Transverse colon (tissue), 4 donors: ENCODE measurements at regions of chr2 and their contacts with region 1.

Region 1: DNA sequence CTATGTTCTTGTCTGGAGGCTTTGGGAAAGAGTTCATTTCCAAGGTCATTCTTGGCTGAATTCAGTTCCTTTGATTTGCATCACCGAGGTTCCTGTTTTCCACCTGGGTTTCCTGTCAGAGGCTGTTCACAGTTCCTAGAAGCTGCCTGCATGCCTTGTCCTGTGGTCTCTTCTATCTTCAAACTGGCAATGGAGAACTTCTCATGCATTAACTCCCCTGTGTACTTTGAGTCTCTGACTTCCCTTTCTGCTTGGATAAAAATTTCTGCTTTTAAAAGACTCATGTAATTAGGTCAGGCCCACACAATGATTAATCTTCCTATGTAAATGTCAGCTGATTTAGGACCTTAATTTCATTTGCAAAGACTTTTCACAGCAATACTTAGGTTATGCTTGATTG is 499.3 kb upstream of the FANCL start:
- DNase-seq: no peak
- H3K4me3 ChIP-seq: no peak overlapping the region
- H3K27ac ChIP-seq: no peak overlapping the region
- H3K4me1 ChIP-seq: no peaks in the 10 kb centered on the region
- H3K27me3 ChIP-seq: no peaks in the 10 kb centered on the region
- CTCF ChIP-seq: no peak
- EP300 ChIP-seq: no peak
- POLR2A ChIP-seq: no peak

Region 2: GRCh38 chr2:58398406-58398805 is 342.0 kb before region 1 on chr2:
- in situ Hi-C with region 1: no loop called
- intact Hi-C with region 1: no loop called
- DNase-seq: no peak
- H3K4me3 ChIP-seq: no peak overlapping the region
- H3K27ac ChIP-seq: no peak overlapping the region
- H3K4me1 ChIP-seq: no peaks in the 10 kb centered on the region
- H3K27me3 ChIP-seq: no peaks in the 10 kb centered on the region
- CTCF ChIP-seq: no peak
- EP300 ChIP-seq: no peak
- POLR2A ChIP-seq: no peak

Region 3: GRCh38 chr2:58769864-58770234 is 29.4 kb after region 1 on chr2:
- in situ Hi-C with region 1: no loop called
- intact Hi-C with region 1: loop called (anchors 1 kb)
- DNase-seq: no peak
- H3K4me3 ChIP-seq: no peak overlapping the region
- H3K27ac ChIP-seq: no peak overlapping the region
- H3K4me1 ChIP-seq: no peaks in the 10 kb centered on the region
- H3K27me3 ChIP-seq: no peaks in the 10 kb centered on the region
- CTCF ChIP-seq: no peak
- EP300 ChIP-seq: no peak
- POLR2A ChIP-seq: no peak